ENCODE measurements at regions of chr12 and their contacts with region 1.

Region 1: GRCh38 chr12:110600254-110600653 is 13.7 kb upstream of the TCTN1 start:
- DNase-seq: no peak
- H3K4me3 Mint-ChIP-seq: no peak overlapping the region
- H3K27ac Mint-ChIP-seq: no peak overlapping the region
- H3K4me1 Mint-ChIP-seq: peaks cover 16% of the 10 kb centered on the region
- H3K27me3 Mint-ChIP-seq: no peaks in the 10 kb centered on the region

Region 2: GRCh38 chr12:110468212-110469048 is 131.8 kb before region 1 on chr12 and contains the starts of genes FAM216A and GPN3:
- CTCF ChIA-PET with region 1: interaction called, 33 read pairs
- POLR2A ChIA-PET with region 1: interaction called, 3 read pairs
- DNase-seq: peak; percentile 98
- H3K4me3 Mint-ChIP-seq: peak within 1 kb of the TSS; percentile 98
- H3K27ac Mint-ChIP-seq: peak within 1 kb of the TSS; percentile 97
- H3K4me1 Mint-ChIP-seq: peaks cover 43% of the 10 kb centered on the region
- H3K27me3 Mint-ChIP-seq: no peaks in the 10 kb centered on the region
- total RNA-seq, gene FAM216A: 14.6 to 17.5 TPM
- total RNA-seq, gene GPN3: 19.0 to 21.2 TPM

Region 3: DNA sequence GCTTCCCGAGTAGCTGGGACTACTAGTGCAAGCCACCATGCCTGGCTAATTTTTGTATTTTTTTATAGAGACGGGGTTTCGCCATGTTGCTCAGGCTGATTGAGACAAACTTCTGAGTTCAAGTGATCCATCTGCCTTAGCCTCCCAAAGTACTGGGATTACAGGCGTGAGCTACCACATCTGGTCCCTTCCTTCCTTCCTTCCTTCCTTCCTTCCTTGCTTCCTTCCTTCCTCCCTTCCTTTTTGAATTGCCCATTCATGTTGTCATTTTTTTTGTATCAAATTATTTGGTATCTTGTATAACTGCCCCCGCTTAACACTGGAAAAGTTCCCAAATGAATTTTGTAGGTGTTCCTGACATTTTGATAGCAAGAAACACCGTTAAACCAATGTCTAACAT is 86.4 kb before region 1 on chr12:
- CTCF ChIA-PET with region 1: interaction called, 15 read pairs
- POLR2A ChIA-PET with region 1: no interaction called
- DNase-seq: no peak
- H3K4me3 Mint-ChIP-seq: no peak overlapping the region
- H3K27ac Mint-ChIP-seq: no peak overlapping the region
- H3K4me1 Mint-ChIP-seq: no peaks in the 10 kb centered on the region
- H3K27me3 Mint-ChIP-seq: no peaks in the 10 kb centered on the region

Region 4: DNA sequence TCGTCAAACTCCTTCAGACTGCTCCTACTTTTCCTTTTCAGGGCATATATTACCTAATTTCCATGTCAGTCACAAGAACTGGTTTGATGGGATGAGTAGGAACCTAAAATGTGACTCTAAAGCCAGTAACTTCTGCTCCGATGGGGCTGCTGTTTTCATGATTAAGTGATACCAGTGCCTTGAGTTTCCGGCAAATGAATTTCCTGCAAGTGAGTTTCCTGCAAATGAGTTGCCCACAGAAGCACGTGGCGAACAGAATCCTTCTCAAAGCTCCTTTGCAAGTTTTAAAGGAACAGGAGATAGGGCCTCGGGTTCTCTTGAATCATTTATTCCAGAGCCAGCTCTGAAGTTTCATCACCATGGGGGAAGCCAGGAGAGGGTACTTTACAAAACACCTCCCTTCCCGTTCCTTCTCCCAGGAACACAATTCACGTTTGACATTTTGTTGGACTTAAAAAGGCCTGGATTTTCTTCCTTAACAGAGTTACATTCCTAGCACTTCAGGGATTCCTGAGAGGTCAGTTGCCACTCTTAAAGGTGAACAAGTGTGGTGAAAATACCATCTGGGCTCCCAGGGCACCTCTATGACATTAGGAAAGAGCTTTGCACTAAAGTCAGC is 14.9 kb before region 1 on chr12:
- CTCF ChIA-PET with region 1: interaction called, 15 read pairs
- POLR2A ChIA-PET with region 1: no interaction called
- DNase-seq: peak; percentile 61
- H3K4me3 Mint-ChIP-seq: peak overlapping the region; percentile 46
- H3K27ac Mint-ChIP-seq: peak overlapping the region; percentile 94
- H3K4me1 Mint-ChIP-seq: peaks cover 50% of the 10 kb centered on the region
- H3K27me3 Mint-ChIP-seq: no peaks in the 10 kb centered on the region

Region 5: GRCh38 chr12:110677206-110677911 is 77.1 kb after region 1 on chr12:
- CTCF ChIA-PET with region 1: no interaction called
- POLR2A ChIA-PET with region 1: no interaction called
- DNase-seq: no peak
- H3K4me3 Mint-ChIP-seq: peak overlapping the region; percentile 35
- H3K27ac Mint-ChIP-seq: peak overlapping the region; percentile 81
- H3K4me1 Mint-ChIP-seq: peaks cover 48% of the 10 kb centered on the region
- H3K27me3 Mint-ChIP-seq: no peaks in the 10 kb centered on the region

Region 6: GRCh38 chr12:110689281-110690126 is 89.2 kb after region 1 on chr12:
- CTCF ChIA-PET with region 1: no interaction called
- POLR2A ChIA-PET with region 1: no interaction called
- DNase-seq: peak; percentile 76
- H3K4me3 Mint-ChIP-seq: peak overlapping the region; percentile 84
- H3K27ac Mint-ChIP-seq: peak overlapping the region; percentile 96
- H3K4me1 Mint-ChIP-seq: peaks cover 57% of the 10 kb centered on the region
- H3K27me3 Mint-ChIP-seq: peaks cover 5% of the 10 kb centered on the region

Region 7: GRCh38 chr12:110704748-110705147 is 104.5 kb after region 1 on chr12:
- CTCF ChIA-PET with region 1: no interaction called
- POLR2A ChIA-PET with region 1: no interaction called
- DNase-seq: peak; percentile 43
- H3K4me3 Mint-ChIP-seq: no peak overlapping the region
- H3K27ac Mint-ChIP-seq: no peak overlapping the region
- H3K4me1 Mint-ChIP-seq: no peaks in the 10 kb centered on the region
- H3K27me3 Mint-ChIP-seq: no peaks in the 10 kb centered on the region

Measured in activated CD4-positive, alpha-beta T cell treated with anti-CD3 and anti-CD28 coated beads, Interleukin-2, amount 10 ng/mL, durations not matched to agents 7 days and 5 days (primary cell).